ENCODE measurements at regions of chr9 and their contacts with region 1.

Region 1: GRCh38 chr9:113591001-113591898 is 127.7 kb downstream of the RGS3 start:
- DNase-seq: no peak
- ATAC-seq: peak; percentile 72
- H3K4me3 ChIP-seq: no peak overlapping the region
- H3K27ac ChIP-seq: no peak overlapping the region
- H3K4me1 ChIP-seq: peaks cover 29% of the 10 kb centered on the region
- H3K27me3 ChIP-seq: no peaks in the 10 kb centered on the region
- CTCF ChIP-seq: peak; percentile 87 to 93 (median 92)
- EP300 ChIP-seq: no peak
- POLR2A ChIP-seq: no peak
- RAD21 ChIP-seq: peak; percentile 85

Region 2: GRCh38 chr9:113293285-113293878 is 297.9 kb before region 1 on chr9:
- CTCF ChIA-PET with region 1: no interaction called
- POLR2A ChIA-PET with region 1: no interaction called
- RAD21 ChIA-PET with region 1: no interaction called
- SMC1A ChIA-PET with region 1: no interaction called
- in situ Hi-C with region 1: no loop called
- intact Hi-C with region 1: no loop called
- DNase-seq: no peak
- ATAC-seq: no peak
- H3K4me3 ChIP-seq: no peak overlapping the region
- H3K27ac ChIP-seq: no peak overlapping the region
- H3K4me1 ChIP-seq: no peaks in the 10 kb centered on the region
- H3K27me3 ChIP-seq: no peaks in the 10 kb centered on the region
- CTCF ChIP-seq: no peak
- EP300 ChIP-seq: no peak
- POLR2A ChIP-seq: no peak
- RAD21 ChIP-seq: no peak

Region 3: GRCh38 chr9:113446323-113446740 is 144.9 kb before region 1 on chr9:
- CTCF ChIA-PET with region 1: interaction called, 306 read pairs
- POLR2A ChIA-PET with region 1: interaction called, 4 read pairs
- RAD21 ChIA-PET with region 1: interaction called, 74 read pairs
- SMC1A ChIA-PET with region 1: interaction called, 126 read pairs
- in situ Hi-C with region 1: no loop called
- intact Hi-C with region 1: no loop called
- DNase-seq: peak; percentile 25
- ATAC-seq: peak; percentile 80
- H3K4me3 ChIP-seq: no peak overlapping the region
- H3K27ac ChIP-seq: no peak overlapping the region
- H3K4me1 ChIP-seq: no peaks in the 10 kb centered on the region
- H3K27me3 ChIP-seq: no peaks in the 10 kb centered on the region
- CTCF ChIP-seq: peak; percentile 42 to 69 (median 50); a peak in 5 of 6 replicates
- EP300 ChIP-seq: no peak
- POLR2A ChIP-seq: no peak
- RAD21 ChIP-seq: peak; percentile 81

Region 4: GRCh38 chr9:113530022-113530635 is 61.1 kb before region 1 on chr9:
- CTCF ChIA-PET with region 1: interaction called, 48 read pairs
- POLR2A ChIA-PET with region 1: no interaction called
- RAD21 ChIA-PET with region 1: interaction called, 3 read pairs
- SMC1A ChIA-PET with region 1: interaction called, 3 read pairs
- in situ Hi-C with region 1: no loop called
- intact Hi-C with region 1: no loop called
- DNase-seq: no peak
- ATAC-seq: no peak
- H3K4me3 ChIP-seq: no peak overlapping the region
- H3K27ac ChIP-seq: no peak overlapping the region
- H3K4me1 ChIP-seq: no peaks in the 10 kb centered on the region
- H3K27me3 ChIP-seq: no peaks in the 10 kb centered on the region
- CTCF ChIP-seq: no peak
- EP300 ChIP-seq: no peak
- POLR2A ChIP-seq: no peak
- RAD21 ChIP-seq: no peak

Region 5: DNA sequence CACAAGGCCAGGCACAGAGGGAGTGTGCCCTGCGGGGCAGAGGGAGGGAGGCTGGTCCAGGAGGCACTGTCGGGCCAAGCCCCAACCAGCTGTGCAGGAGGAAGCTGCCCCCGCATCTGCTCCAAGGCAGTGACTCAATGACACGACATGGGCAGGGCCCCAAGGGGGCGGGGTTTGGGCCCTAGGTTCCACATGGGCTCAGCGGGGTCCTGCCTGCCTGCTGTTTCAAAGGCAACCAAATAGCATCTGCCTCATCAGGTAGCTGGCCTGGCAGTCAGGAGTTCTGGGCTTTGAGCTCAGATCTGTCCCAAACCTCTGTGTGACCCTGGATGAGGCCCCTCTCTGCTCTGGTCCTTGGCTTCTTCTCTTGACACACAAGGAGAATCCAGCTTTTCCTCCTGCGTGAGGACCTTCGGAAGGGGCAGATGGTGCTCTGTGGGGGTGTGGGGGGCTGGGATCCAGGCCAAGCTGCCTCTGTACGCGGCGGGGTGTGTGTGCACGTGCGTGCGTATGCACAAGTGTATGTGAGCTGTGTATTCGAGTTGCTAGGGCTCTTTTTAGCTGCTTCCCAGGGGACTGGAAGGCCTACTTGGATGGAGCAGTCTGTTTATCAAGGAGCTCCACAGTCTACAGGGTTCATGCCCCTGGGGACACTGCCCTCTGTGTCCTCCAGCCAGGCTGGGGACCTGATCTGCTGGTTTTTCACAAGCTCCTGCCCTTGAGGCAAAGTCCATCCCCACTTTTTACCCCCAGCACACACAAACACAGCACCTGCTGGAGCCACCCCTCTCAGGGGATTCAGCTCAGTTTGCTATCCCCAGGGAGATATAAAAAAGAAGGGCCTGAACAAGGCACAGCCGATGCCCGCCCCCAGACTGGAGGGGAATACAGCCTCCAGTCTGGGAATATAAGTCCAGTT is 11.1 kb after region 1 on chr9:
- CTCF ChIA-PET with region 1: interaction called, 15 read pairs
- POLR2A ChIA-PET with region 1: interaction called, 7 read pairs
- RAD21 ChIA-PET with region 1: interaction called, 11 read pairs
- SMC1A ChIA-PET with region 1: interaction called, 23 read pairs
- in situ Hi-C with region 1: no loop called
- intact Hi-C with region 1: no loop called
- DNase-seq: no peak
- ATAC-seq: peak; percentile 86
- H3K4me3 ChIP-seq: no peak overlapping the region
- H3K27ac ChIP-seq: no peak overlapping the region
- H3K4me1 ChIP-seq: peaks cover 7% of the 10 kb centered on the region; the same call in 1 of the 2 replicates
- H3K27me3 ChIP-seq: no peaks in the 10 kb centered on the region
- CTCF ChIP-seq: no peak
- EP300 ChIP-seq: no peak
- POLR2A ChIP-seq: no peak
- RAD21 ChIP-seq: no peak

Region 6: GRCh38 chr9:113608082-113608685 is 16.9 kb after region 1 on chr9:
- CTCF ChIA-PET with region 1: interaction called, 15 read pairs
- POLR2A ChIA-PET with region 1: interaction called, 7 read pairs
- RAD21 ChIA-PET with region 1: interaction called, 4 read pairs
- SMC1A ChIA-PET with region 1: interaction called, 23 read pairs
- in situ Hi-C with region 1: no loop called
- intact Hi-C with region 1: no loop called
- DNase-seq: no peak
- ATAC-seq: no peak
- H3K4me3 ChIP-seq: no peak overlapping the region
- H3K27ac ChIP-seq: no peak overlapping the region
- H3K4me1 ChIP-seq: no peaks in the 10 kb centered on the region
- H3K27me3 ChIP-seq: no peaks in the 10 kb centered on the region
- CTCF ChIP-seq: no peak
- EP300 ChIP-seq: no peak
- POLR2A ChIP-seq: no peak
- RAD21 ChIP-seq: no peak

Region 7: DNA sequence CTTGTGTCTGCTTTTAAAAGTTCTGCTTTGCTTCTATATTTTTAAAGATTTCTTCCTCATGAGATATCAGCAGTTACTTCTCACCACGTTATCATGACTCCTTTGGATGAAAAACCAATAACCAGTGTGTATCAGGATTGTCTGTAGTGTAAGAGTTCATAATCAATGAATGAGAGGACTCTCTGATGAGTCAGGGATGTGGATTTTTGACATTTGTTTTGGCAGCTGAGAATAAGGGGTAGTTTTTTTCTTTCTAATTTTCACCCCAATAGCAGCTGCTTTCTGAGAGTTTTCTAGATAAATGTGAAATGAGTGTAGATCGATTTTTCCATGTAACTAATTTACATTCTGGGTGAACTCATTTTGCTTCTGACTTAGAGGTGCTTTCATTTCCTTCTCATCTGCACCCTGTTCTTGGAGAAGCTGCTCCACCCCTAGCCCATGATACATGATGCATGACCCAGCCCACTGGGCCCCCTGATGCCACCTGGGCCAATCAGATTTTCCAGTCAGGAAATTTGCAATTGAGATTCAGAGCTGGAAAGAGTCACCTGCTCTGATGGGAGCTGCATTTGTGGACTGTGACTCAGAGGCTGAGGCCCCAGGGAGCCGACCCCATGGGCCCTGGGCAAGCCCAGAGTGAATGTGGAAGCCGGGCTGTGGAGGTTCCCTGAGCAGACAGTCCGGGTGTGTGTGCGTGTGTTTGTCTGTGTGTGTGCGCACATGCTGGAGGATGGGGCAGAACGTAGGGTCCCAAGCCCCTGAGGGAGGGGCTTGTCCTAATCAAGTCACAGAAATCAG is 31.6 kb after region 1 on chr9:
- CTCF ChIA-PET with region 1: interaction called, 17 read pairs
- POLR2A ChIA-PET with region 1: no interaction called
- RAD21 ChIA-PET with region 1: interaction called, 5 read pairs
- SMC1A ChIA-PET with region 1: interaction called, 3 read pairs
- in situ Hi-C with region 1: no loop called
- intact Hi-C with region 1: no loop called
- DNase-seq: peak; percentile 44
- ATAC-seq: peak; percentile 86
- H3K4me3 ChIP-seq: no peak overlapping the region
- H3K27ac ChIP-seq: no peak overlapping the region
- H3K4me1 ChIP-seq: peaks cover 5% of the 10 kb centered on the region
- H3K27me3 ChIP-seq: no peaks in the 10 kb centered on the region
- CTCF ChIP-seq: no peak
- EP300 ChIP-seq: no peak
- POLR2A ChIP-seq: 0 out of 2 replicates have a peak, but pooled peaks have one; percentile 23
- RAD21 ChIP-seq: no peak

Region 8: GRCh38 chr9:113634596-113635515 is 43.6 kb after region 1 on chr9:
- CTCF ChIA-PET with region 1: no interaction called
- POLR2A ChIA-PET with region 1: no interaction called
- RAD21 ChIA-PET with region 1: no interaction called
- SMC1A ChIA-PET with region 1: no interaction called
- in situ Hi-C with region 1: no loop called
- intact Hi-C with region 1: no loop called
- DNase-seq: no peak
- ATAC-seq: no peak
- H3K4me3 ChIP-seq: no peak overlapping the region
- H3K27ac ChIP-seq: no peak overlapping the region
- H3K4me1 ChIP-seq: no peaks in the 10 kb centered on the region
- H3K27me3 ChIP-seq: no peaks in the 10 kb centered on the region; a peak in 1 of 4 replicates
- CTCF ChIP-seq: no peak
- EP300 ChIP-seq: no peak
- POLR2A ChIP-seq: no peak
- RAD21 ChIP-seq: no peak

Region 9: GRCh38 chr9:113734826-113735225 is 143.6 kb after region 1 on chr9:
- CTCF ChIA-PET with region 1: no interaction called
- POLR2A ChIA-PET with region 1: no interaction called
- RAD21 ChIA-PET with region 1: no interaction called
- SMC1A ChIA-PET with region 1: no interaction called
- in situ Hi-C with region 1: no loop called
- intact Hi-C with region 1: no loop called
- DNase-seq: no peak
- ATAC-seq: no peak
- H3K4me3 ChIP-seq: no peak overlapping the region
- H3K27ac ChIP-seq: no peak overlapping the region
- H3K4me1 ChIP-seq: no peaks in the 10 kb centered on the region
- H3K27me3 ChIP-seq: no peaks in the 10 kb centered on the region; a peak in 1 of 4 replicates
- CTCF ChIP-seq: no peak
- EP300 ChIP-seq: no peak
- POLR2A ChIP-seq: no peak
- RAD21 ChIP-seq: no peak